Breast epithelium (tissue), 4 donors: ENCODE measurements at regions of chr5 and their contacts with region 1.

Region 1: GRCh38 chr5:177362610-177363507 is 5.1 kb downstream of the RGS14 start:
- DNase-seq: peak; percentile 40 to 73
- H3K4me3 ChIP-seq: peak overlapping the region; percentile 30 to 71 (median 63)
- H3K27ac ChIP-seq: peak overlapping the region; percentile 60 to 81
- H3K4me1 ChIP-seq: peaks cover 7 to 16% of the 10 kb centered on the region in 2 donors
- H3K27me3 ChIP-seq: no peaks in the 10 kb centered on the region
- CTCF ChIP-seq: peak in 1 of 3 donors; percentile 11
- POLR2A ChIP-seq: no peak

Region 2: GRCh38 chr5:177311723-177312648 is 50.9 kb before region 1 on chr5 and contains the start of gene MXD3:
- intact Hi-C with region 1: loop called (anchors 10 kb)
- DNase-seq: peak; percentile 96
- H3K4me3 ChIP-seq: peak within 1 kb of the TSS; percentile 47 to 72 (median 61)
- H3K27ac ChIP-seq: peak within 1 kb of the TSS in 1 of 2 donors; percentile 36
- H3K4me1 ChIP-seq: peaks cover 10 to 11% of the 10 kb centered on the region in 2 donors
- H3K27me3 ChIP-seq: no peaks in the 10 kb centered on the region
- CTCF ChIP-seq: no peak
- POLR2A ChIP-seq: no peak
- total RNA-seq, gene MXD3: 4.2 to 10.5 (median 9.4) TPM

Region 3: GRCh38 chr5:177339107-177339638 is 23.7 kb before region 1 on chr5:
- intact Hi-C with region 1: loop called (anchors 1 kb)
- DNase-seq: no peak
- H3K4me3 ChIP-seq: no peak overlapping the region
- H3K27ac ChIP-seq: peak overlapping the region in 1 of 2 donors; percentile 68
- H3K4me1 ChIP-seq: peaks cover 0 to 9% of the 10 kb centered on the region in 2 donors
- H3K27me3 ChIP-seq: no peaks in the 10 kb centered on the region
- CTCF ChIP-seq: no peak
- POLR2A ChIP-seq: no peak